IMR-90 (cell line): ENCODE measurements at regions of chr2 and their contacts with region 1.

Region 1: GRCh38 chr2:196076778-196077568 is 8.3 kb upstream of the DNAH7 start:
- DNase-seq: no peak
- ATAC-seq: no peak
- H3K4me3 ChIP-seq: no peak overlapping the region
- H3K27ac ChIP-seq: peak overlapping the region; percentile 5; the same call in 1 of the 2 replicates
- H3K4me1 ChIP-seq: peaks cover 6% of the 10 kb centered on the region
- H3K27me3 ChIP-seq: no peaks in the 10 kb centered on the region
- CTCF ChIP-seq: no peak
- POLR2A ChIP-seq: no peak
- RAD21 ChIP-seq: no peak

Region 2: GRCh38 chr2:195252018-195252417 is 825.0 kb before region 1 on chr2:
- CTCF ChIA-PET with region 1: no interaction called
- POLR2A ChIA-PET with region 1: no interaction called
- dilution Hi-C with region 1: no loop called
- in situ Hi-C with region 1: no loop called
- intact Hi-C with region 1: no loop called
- DNase-seq: no peak
- ATAC-seq: no peak
- H3K4me3 ChIP-seq: no peak overlapping the region
- H3K27ac ChIP-seq: no peak overlapping the region
- H3K4me1 ChIP-seq: no peaks in the 10 kb centered on the region
- H3K27me3 ChIP-seq: no peaks in the 10 kb centered on the region
- CTCF ChIP-seq: no peak
- POLR2A ChIP-seq: no peak
- RAD21 ChIP-seq: no peak

Region 3: DNA sequence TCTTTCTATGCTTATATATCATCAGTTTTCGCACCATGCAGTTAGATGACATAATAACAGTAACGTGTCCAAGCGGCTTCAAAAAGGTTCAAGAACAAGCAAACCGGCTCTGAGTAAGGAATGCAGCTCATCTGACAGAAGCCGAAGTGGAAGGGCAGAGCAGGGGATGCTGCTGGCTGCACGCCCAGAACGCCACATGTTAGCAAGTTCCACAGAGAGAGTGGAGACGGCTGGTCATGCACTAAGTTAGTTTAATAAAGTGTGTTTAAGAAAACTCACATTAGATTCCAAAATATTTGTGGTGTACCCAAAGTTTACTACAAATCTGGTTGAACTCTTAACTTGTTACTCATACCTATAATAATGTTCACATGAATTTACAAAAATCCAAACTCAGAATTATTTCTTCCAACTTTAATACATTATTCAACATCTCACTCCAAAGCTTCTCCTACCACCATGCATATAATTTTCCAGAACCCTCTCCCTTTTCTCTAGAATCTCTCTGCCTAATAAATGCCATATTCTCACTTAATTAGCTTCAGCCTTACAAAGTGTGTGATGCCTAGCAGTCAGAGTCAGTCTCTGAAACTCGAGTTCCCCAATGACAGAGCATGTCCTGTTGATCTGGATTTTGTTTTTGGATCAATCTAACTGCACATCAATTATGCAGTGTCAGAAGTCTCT is 178.3 kb before region 1 on chr2:
- CTCF ChIA-PET with region 1: no interaction called
- POLR2A ChIA-PET with region 1: no interaction called
- dilution Hi-C with region 1: no loop called
- in situ Hi-C with region 1: no loop called
- intact Hi-C with region 1: no loop called
- DNase-seq: peak; percentile 100
- ATAC-seq: peak; percentile 99
- H3K4me3 ChIP-seq: no peak overlapping the region
- H3K27ac ChIP-seq: peak overlapping the region; percentile 36; the same call in 1 of the 2 replicates
- H3K4me1 ChIP-seq: peaks cover 2% of the 10 kb centered on the region; the same call in 1 of the 2 replicates
- H3K27me3 ChIP-seq: no peaks in the 10 kb centered on the region
- CTCF ChIP-seq: no peak
- POLR2A ChIP-seq: no peak
- RAD21 ChIP-seq: 0 out of 2 replicates have a peak, but pooled peaks have one; percentile 6

Region 4: DNA sequence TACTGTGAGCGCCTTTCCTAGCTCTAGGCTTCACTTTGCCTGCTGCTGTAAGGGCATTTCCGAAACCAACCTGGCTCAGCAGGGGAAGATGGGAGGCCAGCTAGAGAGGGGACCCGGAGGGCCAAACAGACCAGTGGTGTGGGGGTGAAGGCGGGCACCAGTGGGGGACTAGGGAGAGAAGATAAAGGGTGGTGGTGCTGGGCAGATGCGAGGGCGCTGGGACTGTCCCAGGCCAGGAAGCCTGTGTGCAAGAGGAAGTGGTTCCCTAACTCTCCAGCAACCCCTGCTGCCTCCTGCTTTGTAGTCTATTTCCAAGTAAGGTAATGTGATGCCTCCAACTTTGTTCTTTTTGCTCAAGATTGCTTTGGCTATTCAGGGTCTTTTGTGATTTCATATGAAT is 81.5 kb before region 1 on chr2:
- CTCF ChIA-PET with region 1: no interaction called
- POLR2A ChIA-PET with region 1: no interaction called
- dilution Hi-C with region 1: no loop called
- in situ Hi-C with region 1: no loop called
- intact Hi-C with region 1: no loop called
- DNase-seq: no peak
- ATAC-seq: no peak
- H3K4me3 ChIP-seq: no peak overlapping the region
- H3K27ac ChIP-seq: no peak overlapping the region
- H3K4me1 ChIP-seq: no peaks in the 10 kb centered on the region
- H3K27me3 ChIP-seq: no peaks in the 10 kb centered on the region; the same call in 1 of the 2 replicates
- CTCF ChIP-seq: no peak
- POLR2A ChIP-seq: no peak
- RAD21 ChIP-seq: no peak

Region 5: GRCh38 chr2:196171248-196171871 is 94.4 kb after region 1 on chr2 and contains the start of gene STK17B:
- CTCF ChIA-PET with region 1: interaction called, 5 read pairs
- POLR2A ChIA-PET with region 1: no interaction called
- dilution Hi-C with region 1: no loop called
- in situ Hi-C with region 1: no loop called
- intact Hi-C with region 1: loop called (anchors 1 kb)
- DNase-seq: peak; percentile 91
- ATAC-seq: peak; percentile 91
- H3K4me3 ChIP-seq: peak within 1 kb of the TSS; percentile 67
- H3K27ac ChIP-seq: peak within 1 kb of the TSS; percentile 67
- H3K4me1 ChIP-seq: peaks cover 2% of the 10 kb centered on the region
- H3K27me3 ChIP-seq: no peaks in the 10 kb centered on the region
- CTCF ChIP-seq: no peak
- POLR2A ChIP-seq: peak; percentile 97
- RAD21 ChIP-seq: peak; percentile 15; the same call in 1 of the 2 replicates
- total RNA-seq, gene STK17B: 48.9 and 50.3 TPM in 2 replicates

Region 6: GRCh38 chr2:196291873-196292800 is 215.2 kb after region 1 on chr2:
- CTCF ChIA-PET with region 1: no interaction called
- POLR2A ChIA-PET with region 1: no interaction called
- dilution Hi-C with region 1: no loop called
- in situ Hi-C with region 1: loop called (anchors 5 kb)
- intact Hi-C with region 1: loop called (anchors 1 kb)
- DNase-seq: no peak
- ATAC-seq: no peak
- H3K4me3 ChIP-seq: no peak overlapping the region
- H3K27ac ChIP-seq: no peak overlapping the region
- H3K4me1 ChIP-seq: peaks cover 11% of the 10 kb centered on the region
- H3K27me3 ChIP-seq: no peaks in the 10 kb centered on the region
- CTCF ChIP-seq: no peak
- POLR2A ChIP-seq: no peak
- RAD21 ChIP-seq: no peak

Region 7: GRCh38 chr2:196592912-196593881 is 516.2 kb after region 1 on chr2:
- CTCF ChIA-PET with region 1: no interaction called
- POLR2A ChIA-PET with region 1: no interaction called
- dilution Hi-C with region 1: no loop called
- in situ Hi-C with region 1: no loop called
- intact Hi-C with region 1: loop called (anchors 2 kb)
- DNase-seq: peak; percentile 57
- ATAC-seq: peak; percentile 83
- H3K4me3 ChIP-seq: peak within 1 kb of the TSS; percentile 96
- H3K27ac ChIP-seq: peak within 1 kb of the TSS; percentile 50; the same call in 1 of the 2 replicates
- H3K4me1 ChIP-seq: no peaks in the 10 kb centered on the region
- H3K27me3 ChIP-seq: no peaks in the 10 kb centered on the region
- CTCF ChIP-seq: no peak
- POLR2A ChIP-seq: peak; percentile 31; the same call in 1 of the 2 replicates
- RAD21 ChIP-seq: no peak

Region 8: GRCh38 chr2:196758474-196759377 is 681.8 kb after region 1 on chr2:
- CTCF ChIA-PET with region 1: no interaction called
- POLR2A ChIA-PET with region 1: no interaction called
- dilution Hi-C with region 1: no loop called
- in situ Hi-C with region 1: loop called (anchors 10 kb)
- intact Hi-C with region 1: loop called (anchors 2 kb)
- DNase-seq: peak; percentile 46
- ATAC-seq: peak; percentile 85
- H3K4me3 ChIP-seq: no peak overlapping the region
- H3K27ac ChIP-seq: no peak overlapping the region
- H3K4me1 ChIP-seq: no peaks in the 10 kb centered on the region
- H3K27me3 ChIP-seq: no peaks in the 10 kb centered on the region
- CTCF ChIP-seq: peak; percentile 66
- POLR2A ChIP-seq: no peak
- RAD21 ChIP-seq: peak; percentile 58